SK-N-SH (cell line): ENCODE measurements at regions of chr7 and their contacts with region 1.

Region 1: GRCh38 chr7:154684666-154685563 is 318.0 kb downstream of the PAXIP1 start:
- DNase-seq: peak; percentile 75
- H3K4me3 ChIP-seq: no peak overlapping the region
- H3K27ac ChIP-seq: peak overlapping the region in 1 of 2 experiments; percentile 65; a peak in 2 of 4 replicates
- H3K4me1 ChIP-seq: peaks cover 0 to 33% of the 10 kb centered on the region in 2 experiments; a peak in 2 of 4 replicates
- H3K27me3 ChIP-seq: no peaks in the 10 kb centered on the region
- CTCF ChIP-seq: no peak
- EP300 ChIP-seq: peak in 1 of 2 experiments; percentile 51; a peak in 2 of 4 replicates
- RAD21 ChIP-seq: no peak

Region 2: DNA sequence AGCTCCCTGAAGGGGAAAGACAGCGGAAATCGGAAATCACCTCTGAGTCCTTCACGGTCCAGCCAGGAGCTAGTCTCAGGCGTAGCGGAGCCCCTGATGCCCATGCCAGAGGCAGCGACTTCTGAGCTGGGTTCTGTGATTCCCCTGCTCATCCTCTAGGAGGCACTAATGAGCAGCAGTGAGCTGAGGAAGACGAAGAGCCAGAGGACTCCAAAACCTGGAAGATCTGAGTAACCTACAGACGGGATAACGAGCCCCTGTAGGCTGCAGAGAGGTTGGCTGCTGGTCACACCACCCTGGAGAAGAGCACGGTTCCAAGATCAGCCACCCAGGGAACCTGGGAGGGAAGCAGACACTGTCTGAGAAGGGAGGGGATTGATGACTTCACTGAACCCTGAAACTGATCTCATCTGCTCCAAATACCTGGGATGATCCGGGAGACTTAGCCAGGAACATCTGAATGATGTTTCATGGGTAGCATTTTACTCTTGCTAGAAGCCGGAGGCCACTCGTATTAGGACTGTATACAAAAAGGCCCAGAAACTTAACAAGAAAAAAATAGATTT is 13.9 kb after region 1 on chr7:
- CTCF ChIA-PET with region 1: interaction called, 12 read pairs
- POLR2A ChIA-PET with region 1: no interaction called
- DNase-seq: peak; percentile 45
- H3K4me3 ChIP-seq: no peak overlapping the region
- H3K27ac ChIP-seq: no peak overlapping the region
- H3K4me1 ChIP-seq: no peaks in the 10 kb centered on the region
- H3K27me3 ChIP-seq: no peaks in the 10 kb centered on the region
- CTCF ChIP-seq: 0 out of 2 replicates have a peak, but pooled peaks have one; percentile 20
- EP300 ChIP-seq: no peak
- RAD21 ChIP-seq: peak; percentile 46